OCI-LY7 (cell line): ENCODE measurements at regions of chr3 and their contacts with region 1.

Region 1: DNA sequence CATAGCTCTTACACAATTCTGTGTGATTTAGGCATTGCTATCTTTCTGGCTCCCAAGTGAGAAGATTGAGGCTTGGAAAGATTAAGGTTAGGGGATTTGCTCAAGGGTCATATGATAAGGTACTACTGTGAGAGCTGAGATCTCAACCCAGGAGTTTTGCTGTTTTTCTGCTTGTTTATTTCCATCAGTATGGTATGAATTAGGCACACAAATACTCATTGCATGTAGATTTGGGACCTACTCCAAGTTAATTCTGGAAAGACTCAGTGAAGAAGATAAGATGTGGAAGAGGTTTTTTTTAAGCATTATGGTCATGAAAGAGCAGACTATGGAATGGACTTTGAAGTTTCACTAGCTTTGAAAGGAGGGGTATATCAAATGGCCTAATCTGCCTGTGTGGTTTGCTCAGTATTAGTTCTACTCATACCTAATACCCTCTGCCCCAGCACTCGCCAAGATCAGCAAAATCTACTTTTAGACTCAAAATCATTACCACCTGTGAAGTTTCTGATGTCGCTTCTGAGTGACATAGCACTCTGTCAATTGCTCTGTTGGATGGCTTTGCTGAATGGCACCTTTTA is 12.5 kb downstream of the MBNL1 start:
- DNase-seq: no peak
- H3K4me3 ChIP-seq: no peak overlapping the region
- H3K27ac ChIP-seq: no peak overlapping the region
- H3K4me1 ChIP-seq: peaks cover 94% of the 10 kb centered on the region
- CTCF ChIP-seq: no peak

Region 2: GRCh38 chr3:151772825-151773480 is 508.3 kb before region 1 on chr3:
- CTCF ChIA-PET with region 1: no interaction called
- POLR2A ChIA-PET with region 1: no interaction called
- intact Hi-C with region 1: no loop called
- DNase-seq: no peak
- H3K4me3 ChIP-seq: no peak overlapping the region
- H3K27ac ChIP-seq: no peak overlapping the region
- H3K4me1 ChIP-seq: no peaks in the 10 kb centered on the region
- CTCF ChIP-seq: no peak

Region 3: GRCh38 chr3:152113413-152113812 is 167.8 kb before region 1 on chr3:
- CTCF ChIA-PET with region 1: no interaction called
- POLR2A ChIA-PET with region 1: no interaction called
- intact Hi-C with region 1: no loop called
- DNase-seq: no peak
- H3K4me3 ChIP-seq: no peak overlapping the region
- H3K27ac ChIP-seq: no peak overlapping the region
- H3K4me1 ChIP-seq: no peaks in the 10 kb centered on the region
- CTCF ChIP-seq: no peak

Region 4: DNA sequence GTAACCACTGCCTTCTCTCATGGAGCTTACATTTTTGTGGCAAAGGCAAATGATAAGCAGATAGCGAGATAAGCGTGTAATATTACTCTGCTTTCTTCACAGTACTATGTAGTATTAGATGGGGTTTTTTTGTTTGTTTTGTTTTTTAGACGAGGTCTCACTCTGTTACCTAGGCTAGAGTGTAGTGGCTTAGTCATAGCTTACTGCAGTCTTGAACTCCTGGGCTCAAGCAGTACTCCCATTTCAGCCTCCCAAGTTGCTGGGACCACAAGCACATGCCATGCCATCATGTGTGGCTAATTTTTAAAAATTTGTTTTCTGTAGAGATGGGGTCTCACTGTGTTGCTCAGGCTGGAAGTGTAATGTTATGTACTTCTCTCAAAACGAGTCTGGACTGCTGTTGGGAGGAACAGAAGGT is 10.4 kb after region 1 on chr3:
- CTCF ChIA-PET with region 1: no interaction called
- POLR2A ChIA-PET with region 1: interaction called, 18 read pairs
- intact Hi-C with region 1: no loop called
- DNase-seq: no peak
- H3K4me3 ChIP-seq: no peak overlapping the region
- H3K27ac ChIP-seq: no peak overlapping the region
- H3K4me1 ChIP-seq: peaks cover 56% of the 10 kb centered on the region
- CTCF ChIP-seq: no peak

Region 5: DNA sequence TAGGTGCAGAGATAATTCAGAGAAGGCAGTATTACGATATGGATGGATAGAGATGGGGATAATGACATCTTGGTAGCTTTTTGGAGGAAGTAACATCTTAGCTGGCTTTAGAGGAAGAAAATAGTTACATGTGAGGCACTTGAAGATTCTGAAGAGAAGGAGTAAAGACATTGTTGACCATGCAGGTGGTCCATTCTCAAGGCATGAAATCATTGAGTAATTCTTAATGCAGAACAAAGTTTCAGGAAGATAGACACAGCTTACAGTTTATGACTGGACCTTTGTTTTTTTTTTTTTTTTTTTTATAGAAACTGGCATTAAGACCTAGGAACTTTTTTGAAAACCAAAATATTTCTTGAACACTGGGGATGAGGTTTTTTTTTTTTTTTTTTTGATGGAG is 15.7 kb after region 1 on chr3:
- CTCF ChIA-PET with region 1: no interaction called
- POLR2A ChIA-PET with region 1: interaction called, 18 read pairs
- intact Hi-C with region 1: no loop called
- DNase-seq: no peak
- H3K4me3 ChIP-seq: no peak overlapping the region
- H3K27ac ChIP-seq: no peak overlapping the region
- H3K4me1 ChIP-seq: peaks cover 65% of the 10 kb centered on the region
- CTCF ChIP-seq: no peak

Region 6: DNA sequence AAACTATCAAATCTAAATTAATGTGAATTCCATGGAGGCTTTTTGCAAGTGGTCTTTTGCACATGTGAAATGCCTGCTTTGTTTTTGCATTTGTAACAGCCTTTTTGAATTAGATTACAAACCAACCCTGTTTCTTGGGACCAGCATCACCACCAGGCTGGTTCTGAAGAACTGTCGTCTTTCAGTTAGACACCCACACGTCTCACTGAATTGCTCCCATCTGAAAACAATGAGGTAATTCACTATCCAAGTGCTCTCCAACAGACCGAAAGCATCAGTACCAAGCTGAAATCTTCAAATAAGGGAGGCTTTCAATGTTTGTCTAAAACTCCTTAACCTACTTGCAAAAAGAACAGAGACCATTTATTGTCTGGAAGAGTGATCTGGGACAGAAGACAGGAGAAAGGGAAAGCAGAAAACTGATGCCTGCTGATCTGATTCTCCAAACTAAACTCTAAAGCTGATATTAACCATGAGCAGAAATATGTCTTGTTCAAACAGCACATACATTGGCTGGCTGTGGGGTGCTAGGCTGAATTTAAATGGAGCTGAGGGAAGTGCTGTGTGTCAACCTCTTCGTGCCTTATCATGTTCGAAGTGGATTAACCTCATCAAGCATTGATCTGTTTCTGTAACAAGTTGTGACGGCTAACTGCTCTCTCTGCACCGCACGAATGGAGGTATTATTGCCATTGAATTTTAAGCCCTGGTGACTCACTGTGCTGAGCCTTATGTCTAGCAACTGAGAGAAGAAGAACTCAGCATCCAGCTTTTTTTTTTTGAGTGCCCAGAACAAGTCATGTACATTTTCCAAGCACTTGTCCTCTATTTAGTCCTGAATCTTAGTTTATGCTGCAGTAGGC is 340.0 kb after region 1 on chr3:
- CTCF ChIA-PET with region 1: no interaction called
- POLR2A ChIA-PET with region 1: no interaction called
- intact Hi-C with region 1: no loop called
- DNase-seq: no peak
- H3K4me3 ChIP-seq: no peak overlapping the region
- H3K27ac ChIP-seq: no peak overlapping the region
- H3K4me1 ChIP-seq: no peaks in the 10 kb centered on the region
- CTCF ChIP-seq: no peak